GM13977 (cell line): ENCODE measurements at regions of chr6 and their contacts with region 1.

Region 1: DNA sequence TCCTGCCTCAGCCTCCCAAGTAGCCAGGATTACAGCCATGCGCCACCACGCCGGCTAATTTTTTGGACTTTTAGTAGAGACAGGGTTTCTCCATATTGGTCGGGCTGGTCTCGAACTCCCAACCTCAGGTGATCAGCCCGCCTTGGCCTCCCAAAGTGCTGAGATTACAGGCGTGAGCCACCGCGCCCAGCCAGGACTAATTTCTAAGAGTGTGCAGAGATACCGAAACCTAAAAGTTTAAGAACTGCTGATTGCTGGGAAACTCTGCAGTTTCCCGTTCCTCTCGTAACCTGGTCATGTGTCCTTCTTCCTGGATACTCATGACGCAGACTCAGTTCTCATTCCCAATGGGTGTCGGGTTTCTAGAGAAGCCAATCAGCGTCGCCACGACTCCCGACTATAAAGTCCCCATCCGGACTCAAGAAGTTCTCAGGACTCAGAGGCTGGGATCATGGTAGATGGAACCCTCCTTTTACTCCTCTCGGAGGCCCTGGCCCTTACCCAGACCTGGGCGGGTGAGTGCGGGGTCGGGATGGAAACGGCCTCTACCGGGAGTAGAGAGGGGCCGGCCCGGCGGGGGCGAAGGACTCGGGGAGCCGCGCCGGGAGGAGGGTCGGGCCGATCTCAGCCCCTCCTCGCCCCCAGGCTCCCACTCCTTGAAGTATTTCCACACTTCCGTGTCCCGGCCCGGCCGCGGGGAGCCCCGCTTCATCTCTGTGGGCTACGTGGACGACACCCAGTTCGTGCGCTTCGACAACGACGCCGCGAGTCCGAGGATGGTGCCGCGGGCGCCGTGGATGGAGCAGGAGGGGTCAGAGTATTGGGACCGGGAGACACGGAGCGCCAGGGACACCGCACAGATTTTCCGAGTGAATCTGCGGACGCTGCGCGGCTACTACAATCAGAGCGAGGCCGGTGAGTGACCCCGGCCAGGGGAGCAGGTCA is at the start of gene HLA-E:
- DNase-seq: peak; percentile 93
- CTCF ChIP-seq: no peak

Region 2: DNA sequence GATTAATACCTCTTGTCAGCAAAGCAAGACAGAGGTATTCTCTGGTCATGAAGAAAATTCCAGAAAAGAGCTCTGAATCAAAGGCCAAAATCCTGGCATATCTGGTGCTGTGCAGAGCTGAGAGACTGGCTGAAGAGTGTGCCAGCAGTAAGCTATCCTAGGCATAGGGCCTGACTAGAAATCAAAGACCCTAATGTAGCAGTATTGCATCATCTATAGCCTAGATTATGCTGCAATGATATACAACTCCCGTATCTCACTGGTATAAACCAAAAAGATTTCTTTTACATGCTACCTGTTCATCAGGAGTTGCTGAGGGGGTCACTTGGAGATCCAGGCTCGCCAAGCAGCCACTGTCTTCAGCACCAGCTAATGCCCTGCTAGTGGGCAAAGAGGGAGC is 193.5 kb before region 1 on chr6:
- in situ Hi-C with region 1: no loop called
- DNase-seq: no peak
- CTCF ChIP-seq: no peak

Region 3: GRCh38 chr6:30537931-30538330 is 48.6 kb after region 1 on chr6:
- in situ Hi-C with region 1: loop called (anchors 5 kb)
- DNase-seq: no peak
- CTCF ChIP-seq: no peak

Region 4: DNA sequence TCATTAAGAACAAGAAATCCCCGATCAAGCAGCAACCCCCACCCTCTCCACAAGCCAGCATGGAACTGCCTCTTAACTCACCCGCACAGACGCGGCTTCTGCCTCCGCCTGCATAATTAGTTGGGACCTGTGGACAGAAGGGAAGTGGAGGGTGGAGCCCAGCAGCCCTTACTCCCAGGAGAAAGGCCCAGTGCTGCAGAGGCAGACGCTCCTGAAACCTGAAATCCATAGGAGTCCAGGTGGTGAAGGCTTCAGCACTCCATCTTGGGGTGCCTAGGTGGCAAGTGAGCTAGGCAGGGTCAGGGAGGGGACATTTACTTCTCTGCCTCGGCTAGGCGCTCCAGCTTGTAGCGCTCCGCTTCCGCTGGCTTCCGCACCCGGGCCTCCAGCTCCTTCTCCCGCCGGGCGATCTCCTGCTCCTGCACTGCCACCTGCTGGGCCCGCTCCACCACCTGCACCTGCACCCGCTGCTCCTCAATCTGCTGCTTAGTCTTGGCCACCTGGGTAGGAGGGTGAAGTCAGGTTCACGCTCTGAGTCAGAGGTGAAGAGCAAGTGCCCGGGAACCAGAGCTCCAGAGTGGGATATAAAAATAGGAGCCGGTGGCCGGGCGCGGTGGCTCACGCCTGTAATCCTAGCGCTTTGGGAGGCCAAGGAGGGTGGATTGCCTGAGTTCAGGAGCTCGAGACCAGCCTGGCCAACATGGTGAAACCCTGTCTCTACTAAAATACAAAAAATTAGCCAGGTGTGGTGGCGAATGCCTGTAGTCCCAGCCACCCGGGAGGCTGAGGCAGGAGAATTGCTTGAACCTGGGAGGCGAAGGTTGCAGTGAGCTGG is 241.5 kb after region 1 on chr6:
- in situ Hi-C with region 1: loop called (anchors 10 kb)
- DNase-seq: peak; percentile 76
- CTCF ChIP-seq: peak; percentile 93